Heart left ventricle (tissue), 16 donors: ENCODE measurements at regions of chr20 and their contacts with region 1.

Region 1: GRCh38 chr20:34876162-34877001 is at the start of gene ACSS2:
- DNase-seq: peak; percentile 99 to 100 (median 100)
- ATAC-seq: peak; percentile 89 to 94 (median 92)
- H3K4me3 ChIP-seq: peak within 1 kb of the TSS; percentile 58 to 98 (median 78)
- H3K27ac ChIP-seq: peak within 1 kb of the TSS; percentile 66 to 95 (median 90)
- H3K4me1 ChIP-seq: peaks cover 2 to 65% (median 38%) of the 10 kb centered on the region in 12 donors
- H3K27me3 ChIP-seq: no peaks in the 10 kb centered on the region
- CTCF ChIP-seq: no peak
- POLR2A ChIP-seq: peak; percentile 65 to 94
- total RNA-seq, gene ACSS2: 87.1 to 113 (median 99.7) TPM

Region 2: DNA sequence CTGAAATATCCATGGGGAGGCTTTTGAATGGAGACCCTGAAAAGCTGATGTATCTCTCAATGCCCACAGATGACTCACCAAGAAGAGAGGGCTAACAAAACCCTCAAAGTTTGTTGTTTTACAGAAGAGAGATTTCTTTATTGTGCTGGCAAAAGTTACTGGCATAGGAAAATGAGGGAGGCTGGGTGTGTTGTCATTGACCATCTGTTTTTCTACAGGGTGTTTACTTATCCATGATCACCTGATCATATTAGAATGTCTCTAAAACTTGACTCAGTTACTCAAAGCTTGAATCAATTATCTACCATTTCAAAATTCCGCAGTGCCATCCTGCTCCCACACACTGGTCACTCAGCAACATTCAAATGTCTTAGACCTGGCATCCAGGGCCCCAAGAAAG is 60.7 kb before region 1 on chr20:
- intact Hi-C with region 1: no loop called
- DNase-seq: no peak
- ATAC-seq: no peak
- H3K4me3 ChIP-seq: no peak overlapping the region
- H3K27ac ChIP-seq: no peak overlapping the region
- H3K4me1 ChIP-seq: peaks cover 0 to 43% (median 11%) of the 10 kb centered on the region in 12 donors
- H3K27me3 ChIP-seq: no peaks in the 10 kb centered on the region
- CTCF ChIP-seq: no peak
- POLR2A ChIP-seq: no peak

Region 3: GRCh38 chr20:34927736-34928135 is 51.4 kb after region 1 on chr20:
- intact Hi-C with region 1: loop called in 1 of 10 experiments (anchors 5 kb)
- DNase-seq: no peak
- ATAC-seq: no peak
- H3K4me3 ChIP-seq: no peak overlapping the region
- H3K27ac ChIP-seq: peak overlapping the region in 2 of 12 donors; percentile 23
- H3K4me1 ChIP-seq: peaks cover 0 to 15% (median 2%) of the 10 kb centered on the region in 12 donors
- H3K27me3 ChIP-seq: no peaks in the 10 kb centered on the region
- CTCF ChIP-seq: no peak
- POLR2A ChIP-seq: no peak

Region 4: GRCh38 chr20:35008411-35009342 is 132.3 kb after region 1 on chr20:
- intact Hi-C with region 1: loop called in 5 of 10 experiments (anchors 2 to 5 kb)
- DNase-seq: peak in 1 of 5 donors; percentile 34
- ATAC-seq: peak in 1 of 4 donors; percentile 2
- H3K4me3 ChIP-seq: no peak overlapping the region
- H3K27ac ChIP-seq: no peak overlapping the region
- H3K4me1 ChIP-seq: peaks cover 0 to 31% (median 4%) of the 10 kb centered on the region in 12 donors
- H3K27me3 ChIP-seq: no peaks in the 10 kb centered on the region
- CTCF ChIP-seq: no peak
- POLR2A ChIP-seq: no peak

Region 5: DNA sequence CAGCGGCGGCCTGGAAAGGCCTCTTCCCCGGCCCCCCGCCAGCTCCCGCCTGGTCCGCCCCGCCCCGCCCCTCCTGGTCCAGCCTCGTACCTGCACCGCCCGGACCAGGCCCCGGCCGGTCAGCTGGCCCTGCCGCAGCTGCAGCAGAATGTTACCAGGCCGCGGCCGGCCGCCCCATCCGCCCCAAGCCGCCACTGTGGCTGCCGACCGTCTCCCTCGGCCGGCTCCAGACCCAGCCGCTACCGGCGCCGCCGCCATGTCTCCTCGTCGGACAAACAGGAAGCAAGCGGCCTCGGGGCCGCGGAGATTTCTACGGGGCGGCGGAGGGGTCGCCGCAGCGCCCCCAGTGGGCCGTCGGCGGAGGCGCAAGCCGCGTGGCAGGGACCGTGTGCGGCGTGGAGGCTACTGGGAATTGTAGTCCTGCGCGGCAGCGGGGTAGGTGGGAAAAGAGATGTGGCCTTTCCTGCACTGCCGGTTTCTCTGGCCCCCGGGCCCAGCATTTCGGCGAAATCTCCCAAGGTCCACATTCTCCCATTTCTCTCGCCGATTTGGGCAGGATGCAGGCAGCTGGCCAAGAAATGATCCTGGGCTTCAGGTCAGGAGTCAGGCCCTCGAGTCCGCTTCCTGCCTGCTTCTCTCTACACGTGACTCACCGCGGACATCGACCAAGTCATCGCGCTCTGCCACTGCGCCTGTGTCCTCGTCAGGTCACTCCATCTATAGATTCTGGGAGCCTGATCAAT is 216.3 kb after region 1 on chr20 and contains the start of gene TRPC4AP:
- intact Hi-C with region 1: loop called in 5 of 10 experiments (anchors 2 to 10 kb)
- DNase-seq: peak; percentile 89 to 96 (median 91)
- ATAC-seq: peak; percentile 85 to 97 (median 94)
- H3K4me3 ChIP-seq: peak within 1 kb of the TSS; percentile 68 to 97 (median 84)
- H3K27ac ChIP-seq: peak within 1 kb of the TSS; percentile 76 to 97 (median 92)
- H3K4me1 ChIP-seq: peaks cover 4 to 47% (median 35%) of the 10 kb centered on the region in 12 donors
- H3K27me3 ChIP-seq: no peaks in the 10 kb centered on the region
- CTCF ChIP-seq: peak in 11 of 12 donors; percentile 94 to 99 (median 97)
- POLR2A ChIP-seq: peak in 1 of 2 donors; percentile 63
- total RNA-seq, gene TRPC4AP: 31.5 to 51.8 (median 38.6) TPM

Region 6: DNA sequence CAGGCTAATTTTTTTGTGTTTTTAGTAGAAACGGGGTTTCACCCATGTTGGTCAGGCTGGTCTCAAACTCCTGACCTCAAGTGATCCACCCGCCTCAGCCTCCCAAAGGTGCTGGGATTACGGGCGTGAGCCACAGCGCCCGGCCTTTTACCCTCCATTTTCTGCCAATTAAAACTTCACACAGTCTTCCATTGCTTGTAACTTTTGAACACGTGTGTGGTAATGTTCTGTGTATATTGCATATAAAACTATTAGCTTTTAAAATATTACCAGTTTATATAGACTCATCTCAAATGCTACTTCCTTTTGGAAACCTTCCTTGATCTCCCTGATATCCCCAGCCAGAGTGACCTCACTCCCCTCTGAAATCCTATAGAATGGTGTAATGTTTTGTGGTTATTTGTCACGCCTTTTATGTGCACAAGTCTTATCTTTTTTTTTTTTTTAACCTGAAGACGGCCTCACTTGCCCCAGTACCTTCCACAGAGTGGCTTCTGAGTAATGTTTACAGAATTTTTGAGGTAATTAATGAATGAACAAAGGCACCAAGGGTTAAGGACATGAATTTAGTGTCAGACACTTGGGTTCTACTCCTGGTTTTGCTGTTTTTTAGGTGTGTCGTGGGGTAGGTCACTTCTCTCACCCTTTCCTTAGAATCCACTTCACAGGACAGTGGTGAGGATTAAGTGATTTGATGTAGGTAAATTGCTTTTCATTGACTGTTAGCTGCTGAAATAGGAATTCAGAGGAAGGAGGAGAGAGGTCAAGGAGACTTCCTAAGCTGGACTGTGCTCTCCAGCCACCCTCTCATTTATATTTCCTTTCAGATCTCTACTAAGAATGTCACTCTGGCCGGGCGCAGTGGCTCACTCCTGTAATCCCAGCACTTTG is 338.9 kb after region 1 on chr20:
- intact Hi-C with region 1: loop called in 3 of 10 experiments (anchors 5 to 10 kb)
- DNase-seq: no peak
- ATAC-seq: no peak
- H3K4me3 ChIP-seq: no peak overlapping the region
- H3K27ac ChIP-seq: no peak overlapping the region
- H3K4me1 ChIP-seq: no peaks in the 10 kb centered on the region
- H3K27me3 ChIP-seq: no peaks in the 10 kb centered on the region
- CTCF ChIP-seq: no peak
- POLR2A ChIP-seq: no peak